ENCODE measurements at regions of chr13 and their contacts with region 1.

Region 1: GRCh38 chr13:50053844-50054243 is 38.6 kb downstream of the KCNRG start:
- DNase-seq: no peak
- H3K4me3 ChIP-seq: no peak overlapping the region
- CTCF ChIP-seq: no peak
- POLR2A ChIP-seq: no peak

Region 2: GRCh38 chr13:49898792-49899191 is 155.1 kb before region 1 on chr13:
- intact Hi-C with region 1: no loop called
- DNase-seq: no peak
- H3K4me3 ChIP-seq: no peak overlapping the region
- CTCF ChIP-seq: no peak
- POLR2A ChIP-seq: no peak

Region 3: GRCh38 chr13:50006426-50007135 is 47.3 kb before region 1 on chr13:
- intact Hi-C with region 1: loop called (anchors 5 kb)
- DNase-seq: no peak
- H3K4me3 ChIP-seq: no peak overlapping the region
- CTCF ChIP-seq: no peak
- POLR2A ChIP-seq: no peak

Region 4: DNA sequence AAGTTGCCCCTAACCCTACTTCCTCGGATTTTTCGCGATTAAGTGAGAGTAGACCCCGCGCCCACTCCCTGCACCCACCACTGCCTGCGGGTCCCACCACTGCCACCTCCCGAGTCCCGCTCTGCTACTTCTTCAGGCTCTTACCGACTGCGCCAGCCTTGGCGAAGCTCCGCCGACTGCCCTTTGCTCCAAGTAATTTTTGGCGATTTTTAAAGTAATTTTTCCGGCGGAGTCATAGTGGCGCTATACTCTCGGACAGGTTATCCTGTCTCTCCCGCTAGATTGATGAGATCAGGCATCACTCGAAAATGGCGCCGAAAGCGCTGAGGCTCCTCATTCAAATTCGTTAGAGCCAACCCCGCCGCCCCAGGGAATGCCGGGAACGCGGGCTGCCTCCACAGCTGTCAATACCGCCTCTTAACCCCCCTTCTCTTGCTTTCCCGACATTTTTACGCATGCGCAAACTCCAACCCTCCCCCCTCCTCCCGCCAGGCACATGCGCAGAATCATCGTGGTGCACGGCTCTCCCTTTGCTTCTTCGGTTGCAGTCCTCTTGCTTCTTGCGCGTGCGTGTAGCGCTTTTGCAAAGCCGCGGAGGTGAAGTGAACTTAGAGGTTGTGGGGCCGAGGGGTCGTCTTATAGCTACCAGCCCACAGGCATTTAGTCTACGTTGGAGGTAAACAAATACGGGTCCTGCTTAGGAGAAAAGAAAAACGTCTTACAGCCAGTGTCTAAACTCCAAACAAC is 28.0 kb after region 1 on chr13:
- intact Hi-C with region 1: no loop called
- DNase-seq: peak; percentile 98 to 99
- H3K4me3 ChIP-seq: peak overlapping the region; percentile 72
- CTCF ChIP-seq: no peak
- POLR2A ChIP-seq: no peak

Region 5: GRCh38 chr13:50393628-50394027 is 339.8 kb after region 1 on chr13:
- intact Hi-C with region 1: loop called (anchors 5 kb)
- DNase-seq: no peak
- H3K4me3 ChIP-seq: no peak overlapping the region
- CTCF ChIP-seq: no peak
- POLR2A ChIP-seq: no peak

Measured in lower leg skin (tissue), 4 donors.